ENCODE measurements at regions of chr3 and their contacts with region 1.

Region 1: GRCh38 chr3:9932843-9933560 is 632 bp upstream of the CRELD1 start:
- DNase-seq: peak; percentile 84 to 91 (median 88)
- ATAC-seq: peak; percentile 87
- H3K4me3 ChIP-seq: peak overlapping the region; percentile 57
- H3K27ac ChIP-seq: peak overlapping the region; percentile 88
- H3K4me1 ChIP-seq: peaks cover 11 to 43% of the 10 kb centered on the region in 2 experiments; a peak in 4 of 5 replicates
- H3K27me3 ChIP-seq: no peaks in the 10 kb centered on the region
- CTCF ChIP-seq: peak; percentile 86 to 96 (median 90)
- EP300 ChIP-seq: no peak
- POLR2A ChIP-seq: no peak; the same call in 1 of the 2 replicates
- RAD21 ChIP-seq: peak; percentile 85 to 86

Region 2: GRCh38 chr3:9779721-9780457 is 153.1 kb before region 1 on chr3:
- CTCF ChIA-PET with region 1: no interaction called
- POLR2A ChIA-PET with region 1: no interaction called
- in situ Hi-C with region 1: no loop called
- intact Hi-C with region 1: loop called (anchors 5 kb)
- DNase-seq: no peak
- ATAC-seq: no peak; the same call in 1 of the 3 replicates
- H3K4me3 ChIP-seq: no peak overlapping the region
- H3K27ac ChIP-seq: peak overlapping the region; percentile 11; the same call in 1 of the 3 replicates
- H3K4me1 ChIP-seq: peaks cover 13 to 15% of the 10 kb centered on the region in 2 experiments
- H3K27me3 ChIP-seq: no peaks in the 10 kb centered on the region
- CTCF ChIP-seq: no peak
- EP300 ChIP-seq: no peak
- POLR2A ChIP-seq: no peak
- RAD21 ChIP-seq: no peak

Region 3: DNA sequence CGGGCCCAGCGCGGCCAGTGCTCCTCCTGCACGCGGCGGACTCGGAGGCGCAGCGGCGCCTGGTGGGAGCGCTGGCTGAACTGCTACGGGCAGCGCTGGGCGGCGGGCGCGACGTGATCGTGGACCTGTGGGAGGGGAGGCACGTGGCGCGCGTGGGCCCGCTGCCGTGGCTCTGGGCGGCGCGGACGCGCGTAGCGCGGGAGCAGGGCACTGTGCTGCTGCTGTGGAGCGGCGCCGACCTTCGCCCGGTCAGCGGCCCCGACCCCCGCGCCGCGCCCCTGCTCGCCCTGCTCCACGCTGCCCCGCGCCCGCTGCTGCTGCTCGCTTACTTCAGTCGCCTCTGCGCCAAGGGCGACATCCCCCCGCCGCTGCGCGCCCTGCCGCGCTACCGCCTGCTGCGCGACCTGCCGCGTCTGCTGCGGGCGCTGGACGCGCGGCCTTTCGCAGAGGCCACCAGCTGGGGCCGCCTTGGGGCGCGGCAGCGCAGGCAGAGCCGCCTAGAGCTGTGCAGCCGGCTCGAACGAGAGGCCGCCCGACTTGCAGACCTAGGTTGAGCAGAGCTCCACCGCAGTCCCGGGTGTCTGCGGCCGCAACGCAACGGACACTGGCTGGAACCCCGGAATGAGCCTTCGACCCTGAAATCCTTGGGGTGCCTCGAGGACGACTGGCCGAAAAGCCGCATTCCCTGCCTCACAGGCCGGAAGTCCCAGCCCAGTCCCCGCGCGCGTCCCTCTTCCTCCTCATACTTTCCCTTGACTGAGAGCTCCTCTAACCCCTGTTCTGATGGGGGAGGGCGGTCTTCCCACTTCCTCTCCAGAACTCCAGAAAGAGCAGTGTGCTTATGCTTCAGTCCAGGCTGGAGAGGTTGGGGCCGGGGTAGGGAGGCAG is 17.5 kb before region 1 on chr3:
- CTCF ChIA-PET with region 1: no interaction called
- POLR2A ChIA-PET with region 1: interaction called, 11 read pairs
- in situ Hi-C with region 1: no loop called
- intact Hi-C with region 1: no loop called
- DNase-seq: no peak
- ATAC-seq: no peak
- H3K4me3 ChIP-seq: no peak overlapping the region
- H3K27ac ChIP-seq: peak overlapping the region; percentile 36; the same call in 2 of the 3 replicates
- H3K4me1 ChIP-seq: peaks cover 30 to 49% of the 10 kb centered on the region in 2 experiments
- H3K27me3 ChIP-seq: no peaks in the 10 kb centered on the region
- CTCF ChIP-seq: no peak
- EP300 ChIP-seq: no peak
- POLR2A ChIP-seq: no peak
- RAD21 ChIP-seq: no peak

Region 4: GRCh38 chr3:9976721-9977709 is 44.0 kb after region 1 on chr3:
- CTCF ChIA-PET with region 1: no interaction called
- POLR2A ChIA-PET with region 1: interaction called, 15 read pairs
- in situ Hi-C with region 1: no loop called
- intact Hi-C with region 1: loop called (anchors 2 kb)
- DNase-seq: peak; percentile 80 to 98 (median 86)
- ATAC-seq: peak; percentile 93
- H3K4me3 ChIP-seq: peak overlapping the region; percentile 27
- H3K27ac ChIP-seq: peak overlapping the region; percentile 99
- H3K4me1 ChIP-seq: peaks cover 37 to 43% of the 10 kb centered on the region in 2 experiments
- H3K27me3 ChIP-seq: no peaks in the 10 kb centered on the region
- CTCF ChIP-seq: no peak
- EP300 ChIP-seq: peak; percentile 94
- POLR2A ChIP-seq: peak; percentile 52
- RAD21 ChIP-seq: 0 out of 4 replicates have a peak, but pooled peaks of 1 of the 2 experiments have one; percentile 13

Region 5: GRCh38 chr3:10026084-10026890 is 93.3 kb after region 1 on chr3 and contains the start of gene FANCD2:
- CTCF ChIA-PET with region 1: interaction called, 7 read pairs
- POLR2A ChIA-PET with region 1: no interaction called
- in situ Hi-C with region 1: no loop called
- intact Hi-C with region 1: loop called (anchors 1 kb)
- DNase-seq: peak; percentile 86 to 96 (median 88)
- ATAC-seq: peak; percentile 92
- H3K4me3 ChIP-seq: peak within 1 kb of the TSS; percentile 81
- H3K27ac ChIP-seq: peak within 1 kb of the TSS; percentile 86
- H3K4me1 ChIP-seq: peaks cover 10 to 13% of the 10 kb centered on the region in 2 experiments; a peak in 4 of 5 replicates
- H3K27me3 ChIP-seq: no peaks in the 10 kb centered on the region; a peak in 1 of 5 replicates
- CTCF ChIP-seq: no peak
- EP300 ChIP-seq: peak; percentile 58
- POLR2A ChIP-seq: peak; percentile 88
- RAD21 ChIP-seq: peak in 1 of 2 experiments; percentile 23; a peak in 2 of 4 replicates
- polyA plus RNA-seq, gene FANCD2: 86.6 to 105 TPM

Region 6: DNA sequence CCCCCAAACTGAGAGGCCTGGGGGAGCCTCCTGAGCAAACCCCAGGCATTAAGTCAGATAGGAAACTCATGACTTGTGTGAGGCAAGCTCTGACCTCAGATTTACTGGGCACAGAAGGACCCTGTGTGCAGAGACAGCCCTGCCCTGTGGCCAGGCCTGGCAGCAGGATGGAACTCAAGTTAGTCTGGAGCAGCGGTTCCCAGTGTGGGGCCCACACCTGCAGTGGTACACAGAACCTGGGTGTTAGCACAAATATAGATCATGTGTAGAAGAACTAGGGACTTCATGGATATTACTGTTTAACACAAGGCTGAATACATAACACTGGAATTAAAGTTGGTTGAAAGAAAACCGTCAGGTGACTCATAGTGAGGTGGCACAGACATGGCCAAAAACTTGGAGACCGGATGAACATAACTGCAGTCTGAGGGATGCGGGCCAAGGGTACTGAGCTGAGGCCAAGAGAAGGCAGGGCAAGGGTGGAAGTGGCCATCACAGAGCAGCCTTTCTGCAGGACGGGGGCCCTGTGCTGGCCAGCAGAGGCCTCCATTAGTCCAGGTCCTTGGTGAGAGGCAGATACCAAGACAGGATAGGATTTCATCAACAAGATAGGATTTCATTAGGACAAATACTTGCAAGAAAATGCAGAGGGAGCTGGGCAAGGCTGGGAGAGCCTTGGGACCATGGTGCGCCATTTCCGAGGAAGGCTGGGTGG is 272.6 kb after region 1 on chr3:
- CTCF ChIA-PET with region 1: no interaction called
- POLR2A ChIA-PET with region 1: no interaction called
- in situ Hi-C with region 1: no loop called
- intact Hi-C with region 1: no loop called
- DNase-seq: no peak
- ATAC-seq: peak; percentile 32; the same call in 2 of the 3 replicates
- H3K4me3 ChIP-seq: no peak overlapping the region
- H3K27ac ChIP-seq: no peak overlapping the region
- H3K4me1 ChIP-seq: 0 out of 5 replicates have a peak, but pooled peaks cover 0 to 6% of the 10 kb centered on the region in 2 experiments
- H3K27me3 ChIP-seq: no peaks in the 10 kb centered on the region
- CTCF ChIP-seq: no peak
- EP300 ChIP-seq: no peak
- POLR2A ChIP-seq: no peak
- RAD21 ChIP-seq: no peak

Region 7: GRCh38 chr3:10224784-10225665 is 292.0 kb after region 1 on chr3:
- CTCF ChIA-PET with region 1: interaction called, 3 read pairs
- POLR2A ChIA-PET with region 1: no interaction called
- in situ Hi-C with region 1: no loop called
- intact Hi-C with region 1: loop called (anchors 10 kb)
- DNase-seq: peak; percentile 66 to 79 (median 75)
- ATAC-seq: peak; percentile 89
- H3K4me3 ChIP-seq: no peak overlapping the region
- H3K27ac ChIP-seq: no peak overlapping the region
- H3K4me1 ChIP-seq: peaks cover 0 to 3% of the 10 kb centered on the region in 2 experiments; a peak in 2 of 5 replicates
- H3K27me3 ChIP-seq: no peaks in the 10 kb centered on the region
- CTCF ChIP-seq: peak; percentile 77 to 93 (median 83)
- EP300 ChIP-seq: no peak
- POLR2A ChIP-seq: no peak
- RAD21 ChIP-seq: peak; percentile 94 to 96